AG04450 (cell line): ENCODE measurements at regions of chr11 and their contacts with region 1.

Region 1: GRCh38 chr11:74388678-74389327 is 9.4 kb downstream of the PGM2L1 start:
- DNase-seq: no peak
- H3K4me3 ChIP-seq: no peak overlapping the region
- H3K27ac ChIP-seq: no peak overlapping the region
- H3K27me3 ChIP-seq: no peaks in the 10 kb centered on the region
- CTCF ChIP-seq: peak; percentile 84

Region 2: DNA sequence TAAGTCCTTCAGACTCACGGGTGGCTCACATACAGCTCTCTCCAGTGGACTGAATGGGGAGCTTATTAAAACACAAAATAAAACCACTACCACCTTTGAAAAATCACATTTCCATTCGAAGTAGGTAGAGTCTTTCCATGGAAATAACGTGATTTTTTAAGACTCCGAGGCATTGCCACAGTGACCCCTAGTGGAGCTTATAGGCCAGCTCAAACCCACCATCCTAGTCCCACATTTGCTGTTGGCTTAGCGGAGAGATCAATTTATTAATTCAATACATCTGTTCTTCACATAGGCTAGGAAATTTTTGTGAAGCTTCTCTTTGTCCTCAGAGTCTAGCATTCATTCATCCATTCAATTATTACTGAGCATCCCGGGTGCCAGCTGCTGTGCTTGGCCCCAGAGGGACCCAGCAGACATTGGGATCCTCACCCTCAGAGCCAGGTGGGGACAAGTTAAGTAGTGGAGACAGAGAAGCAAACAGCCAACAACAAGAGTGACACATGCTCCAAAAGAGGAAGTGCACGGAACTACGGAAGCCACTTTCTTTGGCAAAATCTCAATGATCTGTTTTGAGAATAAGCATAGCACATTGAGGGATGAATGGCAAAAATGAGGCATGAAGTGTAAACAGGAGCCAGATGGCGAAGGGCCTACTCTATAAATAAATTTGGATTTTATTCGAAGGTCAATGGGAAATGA is 67.2 kb before region 1 on chr11:
- CTCF ChIA-PET with region 1: interaction called, 14 read pairs
- POLR2A ChIA-PET with region 1: interaction called, 9 read pairs
- DNase-seq: no peak
- H3K4me3 ChIP-seq: no peak overlapping the region
- H3K27ac ChIP-seq: no peak overlapping the region
- H3K27me3 ChIP-seq: no peaks in the 10 kb centered on the region
- CTCF ChIP-seq: peak; percentile 68

Region 3: DNA sequence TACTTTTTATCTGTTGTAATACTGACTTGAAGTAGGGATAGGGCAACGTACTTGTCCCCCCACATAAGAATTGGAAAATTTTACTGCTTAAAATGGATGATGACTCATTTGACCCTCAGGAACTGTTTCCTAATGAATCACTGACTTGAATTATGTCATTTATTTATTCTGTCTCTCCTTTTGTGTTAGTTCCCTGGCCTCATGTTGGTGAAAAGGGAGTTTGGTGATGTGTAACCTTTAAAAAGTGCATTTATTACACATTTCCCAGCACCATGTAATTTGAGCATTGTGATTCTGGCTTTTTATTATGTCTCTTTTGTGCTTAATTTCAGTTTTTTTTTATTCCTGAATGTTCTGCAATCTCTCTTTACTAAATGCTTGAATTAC is 29.7 kb after region 1 on chr11:
- CTCF ChIA-PET with region 1: interaction called, 10 read pairs
- POLR2A ChIA-PET with region 1: no interaction called
- DNase-seq: no peak
- H3K4me3 ChIP-seq: no peak overlapping the region
- H3K27ac ChIP-seq: no peak overlapping the region
- H3K27me3 ChIP-seq: no peaks in the 10 kb centered on the region
- CTCF ChIP-seq: no peak

Region 4: DNA sequence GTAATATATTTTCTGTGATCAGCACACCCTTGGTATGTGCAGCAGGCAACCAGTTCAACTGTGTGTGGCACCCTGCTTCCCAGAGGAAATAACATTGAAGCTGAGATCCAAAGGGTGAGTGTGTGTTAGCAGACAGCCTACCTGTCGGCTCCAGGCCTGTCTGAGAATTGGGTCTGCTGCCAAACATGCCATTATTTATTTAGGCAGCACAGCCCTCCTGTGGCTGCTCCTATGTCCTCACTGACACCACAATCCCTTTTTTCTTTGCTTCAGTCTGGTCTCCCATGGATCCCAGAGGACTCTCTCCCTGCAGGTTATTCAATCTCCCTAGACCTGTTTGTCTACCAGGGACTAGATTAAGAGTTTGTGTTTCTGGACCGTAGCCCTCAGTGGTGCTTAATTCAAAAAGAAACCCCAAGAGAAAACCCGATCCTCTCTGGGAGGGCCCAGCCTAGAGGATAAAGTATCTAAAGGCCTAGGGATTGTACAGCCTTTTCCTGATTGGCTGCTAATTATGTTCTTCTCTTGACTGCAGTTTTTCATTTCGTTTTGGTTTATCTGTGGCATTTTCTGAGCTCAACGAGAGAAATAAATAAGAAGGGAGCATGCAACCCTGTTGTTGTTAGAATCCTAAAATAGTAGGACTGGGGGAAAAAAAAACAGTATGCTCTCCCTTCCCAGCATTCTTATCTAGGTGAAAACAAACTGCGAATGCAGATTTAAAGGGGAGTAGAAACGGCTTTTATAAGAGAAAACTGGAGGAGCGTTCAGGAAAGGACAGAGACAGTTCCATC is 54.5 kb after region 1 on chr11:
- CTCF ChIA-PET with region 1: interaction called, 11 read pairs
- POLR2A ChIA-PET with region 1: no interaction called
- DNase-seq: no peak
- H3K4me3 ChIP-seq: no peak overlapping the region
- H3K27ac ChIP-seq: no peak overlapping the region
- H3K27me3 ChIP-seq: peaks cover 2% of the 10 kb centered on the region
- CTCF ChIP-seq: no peak

Region 5: GRCh38 chr11:74570266-74571061 is 181.7 kb after region 1 on chr11:
- CTCF ChIA-PET with region 1: interaction called, 10 read pairs
- POLR2A ChIA-PET with region 1: no interaction called
- DNase-seq: no peak
- H3K4me3 ChIP-seq: no peak overlapping the region
- H3K27ac ChIP-seq: no peak overlapping the region
- H3K27me3 ChIP-seq: peaks cover 12% of the 10 kb centered on the region
- CTCF ChIP-seq: peak; percentile 75

Region 6: DNA sequence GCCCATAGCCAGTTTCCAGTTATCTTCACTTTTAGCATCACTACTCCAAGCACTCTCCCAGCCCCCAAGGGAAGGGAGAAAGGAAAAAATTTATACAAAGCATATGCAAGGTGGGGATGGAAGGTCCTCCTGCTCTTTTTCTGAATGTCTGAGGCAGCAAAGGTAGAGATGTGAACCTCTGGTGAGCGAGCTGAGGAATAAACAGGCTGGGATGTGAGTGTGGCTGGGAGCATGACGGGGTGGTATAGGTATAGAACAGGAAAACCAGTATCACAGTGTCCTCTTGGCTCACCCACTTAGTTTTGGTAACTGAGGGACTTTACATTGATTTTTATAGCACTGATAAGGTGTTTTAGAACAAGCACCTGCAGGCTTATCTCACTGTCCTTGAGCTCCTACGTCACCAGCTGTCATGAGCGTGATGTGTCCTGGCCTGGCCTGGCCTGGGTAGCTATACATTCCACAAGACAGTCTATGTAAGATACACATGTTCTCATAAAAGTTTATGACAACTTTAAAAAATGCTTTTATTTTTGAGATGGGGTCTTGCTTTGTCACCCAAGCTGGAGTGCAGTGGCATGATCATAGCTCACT is 193.2 kb after region 1 on chr11:
- CTCF ChIA-PET with region 1: no interaction called
- POLR2A ChIA-PET with region 1: no interaction called
- DNase-seq: no peak
- H3K4me3 ChIP-seq: no peak overlapping the region
- H3K27ac ChIP-seq: no peak overlapping the region
- H3K27me3 ChIP-seq: peaks cover 3% of the 10 kb centered on the region
- CTCF ChIP-seq: no peak